ENCODE measurements at regions of chr10 and their contacts with region 1.

Region 1: GRCh38 chr10:121244818-121245217 is 353.4 kb downstream of the FGFR2 start:
- DNase-seq: no peak
- ATAC-seq: no peak

Region 2: GRCh38 chr10:120850911-120851865 is 393.6 kb before region 1 on chr10 and contains the start of gene WDR11:
- intact Hi-C with region 1: no loop called
- DNase-seq: peak; percentile 91
- ATAC-seq: peak; percentile 100
- total RNA-seq, gene WDR11: 62.2 TPM

Region 3: GRCh38 chr10:122132331-122132755 is 887.5 kb after region 1 on chr10:
- intact Hi-C with region 1: loop called (anchors 5 kb)
- DNase-seq: no peak
- ATAC-seq: no peak